Activated naive CD4-positive, alpha-beta T cell treated with anti-CD3 and anti-CD28 coated beads for 36 hours (primary cell): ENCODE measurements at regions of chr2 and their contacts with region 1.

Region 1: GRCh38 chr2:529425-529824 is 147.8 kb downstream of the TMEM18 start:
- DNase-seq: no peak
- H3K4me3 Mint-ChIP-seq: no peak overlapping the region
- H3K27ac Mint-ChIP-seq: no peak overlapping the region
- H3K4me1 Mint-ChIP-seq: no peaks in the 10 kb centered on the region
- H3K27me3 Mint-ChIP-seq: peaks cover 12% of the 10 kb centered on the region

Region 2: GRCh38 chr2:584863-585823 is 55.7 kb after region 1 on chr2:
- CTCF ChIA-PET with region 1: interaction called, 9 read pairs
- intact Hi-C with region 1: loop called (anchors 5 kb)
- DNase-seq: peak; percentile 59
- H3K4me3 Mint-ChIP-seq: peak overlapping the region; percentile 8
- H3K27ac Mint-ChIP-seq: no peak overlapping the region
- H3K4me1 Mint-ChIP-seq: peaks cover 11% of the 10 kb centered on the region
- H3K27me3 Mint-ChIP-seq: peaks cover 9% of the 10 kb centered on the region

Region 3: GRCh38 chr2:794554-795241 is 265.3 kb after region 1 on chr2:
- CTCF ChIA-PET with region 1: no interaction called
- intact Hi-C with region 1: no loop called
- DNase-seq: no peak
- H3K4me3 Mint-ChIP-seq: no peak overlapping the region
- H3K27ac Mint-ChIP-seq: no peak overlapping the region
- H3K4me1 Mint-ChIP-seq: no peaks in the 10 kb centered on the region
- H3K27me3 Mint-ChIP-seq: no peaks in the 10 kb centered on the region

Region 4: DNA sequence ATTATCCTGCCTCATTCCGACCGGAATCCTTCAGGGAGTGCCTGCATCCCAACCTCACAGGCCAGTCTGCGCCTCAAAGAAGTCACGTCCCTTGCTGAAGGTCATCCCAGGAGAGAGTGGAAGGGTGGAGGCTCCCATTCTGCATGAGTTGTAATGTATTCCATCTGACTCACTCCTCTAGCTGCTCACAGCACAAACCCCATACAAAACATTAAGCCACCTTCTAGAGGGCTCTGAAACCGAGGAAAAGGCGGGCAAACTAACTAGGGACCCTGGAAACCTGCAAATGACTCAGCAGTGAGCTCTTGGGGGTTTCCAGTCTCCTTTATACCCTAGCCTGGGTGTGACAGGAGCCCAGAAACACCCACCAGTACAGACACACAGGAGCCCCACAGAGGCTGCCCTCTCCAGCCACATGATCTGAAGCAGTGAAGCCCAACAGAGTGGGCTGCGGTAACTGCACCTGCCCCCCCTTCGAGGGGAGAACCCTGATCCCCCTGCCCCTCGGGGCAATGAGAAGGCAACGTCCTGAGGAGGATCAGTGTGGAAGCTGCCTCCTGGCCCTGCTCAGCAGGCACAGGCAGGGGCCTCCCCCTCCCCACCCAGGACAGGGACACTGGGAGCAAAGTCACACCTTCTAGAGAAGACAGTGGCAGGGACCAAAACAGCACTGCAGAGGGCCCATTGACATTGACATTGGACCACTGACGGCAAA is 351.9 kb after region 1 on chr2:
- CTCF ChIA-PET with region 1: no interaction called
- intact Hi-C with region 1: no loop called
- DNase-seq: no peak
- H3K4me3 Mint-ChIP-seq: no peak overlapping the region
- H3K27ac Mint-ChIP-seq: no peak overlapping the region
- H3K4me1 Mint-ChIP-seq: no peaks in the 10 kb centered on the region
- H3K27me3 Mint-ChIP-seq: peaks cover 21% of the 10 kb centered on the region